Psoas muscle (tissue), 8 donors: ENCODE measurements at regions of chr10 and their contacts with region 1.

Region 1: GRCh38 chr10:117483056-117483604 is 59.4 kb upstream of the EMX2 start:
- DNase-seq: no peak
- ATAC-seq: no peak
- H3K4me3 ChIP-seq: no peak overlapping the region
- H3K27ac ChIP-seq: no peak overlapping the region
- H3K4me1 ChIP-seq: no peaks in the 10 kb centered on the region
- H3K27me3 ChIP-seq: no peaks in the 10 kb centered on the region
- CTCF ChIP-seq: no peak

Region 2: DNA sequence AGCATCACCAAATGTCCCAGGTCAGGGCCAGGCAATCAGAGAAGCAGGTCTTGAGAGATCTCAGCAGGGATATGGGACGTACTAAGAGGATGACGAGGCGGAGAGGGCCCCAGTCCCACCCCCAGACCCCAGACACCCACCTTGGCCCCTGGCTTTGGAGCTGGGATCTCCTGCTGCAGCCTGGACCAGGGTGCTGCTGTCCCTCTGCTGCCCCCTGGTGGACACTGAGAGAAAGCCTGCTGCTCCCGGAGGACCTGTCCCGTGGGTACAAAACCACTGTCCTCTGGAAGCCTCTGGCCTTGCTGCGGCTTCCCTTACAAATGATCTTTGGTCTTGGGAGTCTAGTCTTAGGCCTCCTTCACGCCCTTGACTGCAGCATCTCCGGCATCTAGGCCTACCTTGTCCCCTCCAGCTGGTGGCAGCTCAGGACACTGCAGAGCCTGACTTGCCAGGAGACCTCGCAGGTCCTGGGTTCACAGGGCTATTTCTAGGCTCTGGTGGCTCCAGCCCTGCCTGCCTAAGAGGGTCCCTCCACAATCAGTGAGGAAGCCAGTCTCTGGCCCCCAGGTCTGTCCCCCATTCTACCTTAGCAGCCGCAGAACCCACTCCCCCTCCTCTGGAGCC is 1962.3 kb after region 1 on chr10:
- intact Hi-C with region 1: loop called in 1 of 2 experiments (anchors 5 kb)
- DNase-seq: peak; percentile 84 to 91
- ATAC-seq: peak; percentile 70 to 82 (median 78)
- H3K4me3 ChIP-seq: no peak overlapping the region
- H3K27ac ChIP-seq: no peak overlapping the region
- H3K4me1 ChIP-seq: no peaks in the 10 kb centered on the region
- H3K27me3 ChIP-seq: peaks cover 0 to 2% (median 0%) of the 10 kb centered on the region in 3 donors
- CTCF ChIP-seq: peak; percentile 96